Activated naive CD4-positive, alpha-beta T cell treated with anti-CD3 and anti-CD28 coated beads, Interleukin-2, amount 10 ng/mL, durations not matched to agents 7 days and 5 days (primary cell): ENCODE measurements at regions of chr5 and their contacts with region 1.

Region 1: GRCh38 chr5:59188419-59189225 is 605.7 kb downstream of the RAB3C start:
- DNase-seq: peak; percentile 73
- H3K4me3 Mint-ChIP-seq: no peak overlapping the region
- H3K27ac Mint-ChIP-seq: no peak overlapping the region
- H3K4me1 Mint-ChIP-seq: peaks cover 4% of the 10 kb centered on the region
- H3K27me3 Mint-ChIP-seq: peaks cover 27% of the 10 kb centered on the region

Region 2: DNA sequence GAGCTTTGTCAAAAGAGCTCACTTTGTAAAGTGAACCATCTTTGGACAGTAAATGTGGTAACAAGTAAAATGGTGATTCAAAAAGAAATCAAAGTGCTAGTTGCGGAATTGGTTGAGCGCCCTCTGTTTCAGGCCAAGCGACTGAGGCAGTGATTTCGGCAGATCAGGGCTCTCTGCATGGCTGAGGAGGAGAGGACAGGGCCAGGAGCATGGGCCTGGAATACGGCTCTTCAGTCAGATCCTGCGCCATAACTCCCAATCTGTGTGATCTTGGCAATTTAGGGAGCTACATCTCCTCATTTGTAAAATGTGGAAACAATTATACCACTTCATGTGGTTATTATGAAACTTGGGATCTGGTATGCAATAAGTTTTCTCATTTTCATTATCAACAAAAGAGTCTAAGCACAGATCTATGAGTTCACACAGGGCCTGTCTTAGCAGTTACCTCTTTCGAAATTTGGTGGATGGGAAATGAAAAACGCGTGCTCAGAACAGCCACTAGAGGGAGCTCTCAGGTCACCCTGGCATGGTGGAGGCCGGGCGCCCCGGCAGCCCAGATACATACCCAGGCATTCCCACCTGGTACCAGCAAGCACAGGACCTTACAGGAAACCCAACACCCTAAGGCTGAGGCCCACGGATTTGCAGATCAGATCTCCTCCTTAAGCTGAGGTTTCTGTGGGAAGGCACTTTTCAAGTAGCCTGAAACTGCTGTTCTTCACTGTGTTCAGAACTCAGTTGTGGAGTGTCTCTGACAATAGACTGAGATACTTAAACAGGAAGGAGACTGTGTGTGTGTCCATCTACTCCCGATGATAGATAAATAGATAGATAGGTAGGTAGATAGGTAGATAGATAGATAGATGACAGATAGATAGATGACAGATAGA is 302.1 kb before region 1 on chr5:
- CTCF ChIA-PET with region 1: interaction called, 18 read pairs
- DNase-seq: peak; percentile 73
- H3K4me3 Mint-ChIP-seq: no peak overlapping the region
- H3K27ac Mint-ChIP-seq: peak overlapping the region; percentile 56
- H3K4me1 Mint-ChIP-seq: peaks cover 29% of the 10 kb centered on the region
- H3K27me3 Mint-ChIP-seq: peaks cover 21% of the 10 kb centered on the region

Region 3: DNA sequence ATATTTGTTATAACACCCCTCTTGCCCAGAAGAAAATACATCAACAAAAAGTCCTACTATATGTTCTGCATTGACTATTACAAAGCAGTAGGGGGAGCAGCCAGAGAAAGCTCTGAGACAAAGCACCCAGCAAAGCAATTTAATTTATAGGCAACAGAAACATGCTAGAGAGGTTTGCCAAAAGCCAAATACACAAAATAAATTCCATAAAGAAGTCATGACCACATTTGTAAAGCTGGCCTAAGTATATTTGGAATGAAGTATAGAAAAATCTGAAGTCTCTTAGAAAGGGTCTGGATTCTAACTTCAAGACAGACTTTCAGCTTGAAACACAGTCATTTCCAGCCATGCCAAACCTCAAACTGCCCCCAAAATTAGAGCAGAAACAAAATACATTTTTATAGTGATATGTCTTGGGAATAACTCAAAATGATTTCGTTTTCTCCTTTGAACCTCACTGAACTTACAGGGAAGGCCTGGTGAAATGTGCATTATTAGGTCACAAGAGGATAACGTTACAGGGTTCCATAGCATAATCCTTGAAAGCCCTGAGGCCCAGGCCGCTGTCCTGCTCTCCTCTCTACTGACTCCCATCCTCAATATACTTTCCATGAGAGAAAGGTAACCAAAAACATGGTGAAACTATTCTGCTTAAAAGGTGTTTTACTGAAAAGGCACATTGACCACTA is 154.0 kb before region 1 on chr5:
- CTCF ChIA-PET with region 1: interaction called, 12 read pairs
- DNase-seq: peak; percentile 34
- H3K4me3 Mint-ChIP-seq: peak overlapping the region; percentile 89
- H3K27ac Mint-ChIP-seq: peak overlapping the region; percentile 99
- H3K4me1 Mint-ChIP-seq: peaks cover 53% of the 10 kb centered on the region
- H3K27me3 Mint-ChIP-seq: no peaks in the 10 kb centered on the region

Region 4: DNA sequence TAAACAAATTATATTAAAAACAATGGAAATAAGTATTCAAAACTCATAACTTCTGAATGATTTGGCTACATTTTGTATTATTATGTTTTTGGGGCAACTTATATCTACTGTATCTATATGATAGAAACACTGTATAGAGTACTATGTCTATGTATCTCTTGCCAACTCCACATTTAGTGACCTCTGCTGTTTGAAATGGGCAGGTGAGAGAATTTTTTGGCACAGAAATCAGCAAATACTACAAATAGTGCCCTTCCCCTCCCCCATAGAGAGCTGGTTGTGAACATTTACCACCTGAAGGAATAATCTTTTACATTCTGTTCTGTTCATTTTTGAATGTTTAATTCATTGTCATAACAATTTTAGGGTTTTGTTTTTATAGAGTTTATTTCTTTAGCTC is 159.6 kb after region 1 on chr5:
- CTCF ChIA-PET with region 1: interaction called, 12 read pairs
- DNase-seq: no peak
- H3K4me3 Mint-ChIP-seq: no peak overlapping the region
- H3K27ac Mint-ChIP-seq: no peak overlapping the region
- H3K4me1 Mint-ChIP-seq: no peaks in the 10 kb centered on the region
- H3K27me3 Mint-ChIP-seq: peaks cover 1% of the 10 kb centered on the region

Region 5: GRCh38 chr5:59367791-59368394 is 179.3 kb after region 1 on chr5:
- CTCF ChIA-PET with region 1: interaction called, 83 read pairs
- DNase-seq: peak; percentile 64
- H3K4me3 Mint-ChIP-seq: no peak overlapping the region
- H3K27ac Mint-ChIP-seq: no peak overlapping the region
- H3K4me1 Mint-ChIP-seq: no peaks in the 10 kb centered on the region
- H3K27me3 Mint-ChIP-seq: peaks cover 10% of the 10 kb centered on the region

Region 6: GRCh38 chr5:59380350-59380951 is 191.8 kb after region 1 on chr5:
- CTCF ChIA-PET with region 1: interaction called, 45 read pairs
- DNase-seq: peak; percentile 23
- H3K4me3 Mint-ChIP-seq: no peak overlapping the region
- H3K27ac Mint-ChIP-seq: no peak overlapping the region
- H3K4me1 Mint-ChIP-seq: no peaks in the 10 kb centered on the region
- H3K27me3 Mint-ChIP-seq: peaks cover 6% of the 10 kb centered on the region